ENCODE measurements at regions of chr10 and their contacts with region 1.

Region 1: DNA sequence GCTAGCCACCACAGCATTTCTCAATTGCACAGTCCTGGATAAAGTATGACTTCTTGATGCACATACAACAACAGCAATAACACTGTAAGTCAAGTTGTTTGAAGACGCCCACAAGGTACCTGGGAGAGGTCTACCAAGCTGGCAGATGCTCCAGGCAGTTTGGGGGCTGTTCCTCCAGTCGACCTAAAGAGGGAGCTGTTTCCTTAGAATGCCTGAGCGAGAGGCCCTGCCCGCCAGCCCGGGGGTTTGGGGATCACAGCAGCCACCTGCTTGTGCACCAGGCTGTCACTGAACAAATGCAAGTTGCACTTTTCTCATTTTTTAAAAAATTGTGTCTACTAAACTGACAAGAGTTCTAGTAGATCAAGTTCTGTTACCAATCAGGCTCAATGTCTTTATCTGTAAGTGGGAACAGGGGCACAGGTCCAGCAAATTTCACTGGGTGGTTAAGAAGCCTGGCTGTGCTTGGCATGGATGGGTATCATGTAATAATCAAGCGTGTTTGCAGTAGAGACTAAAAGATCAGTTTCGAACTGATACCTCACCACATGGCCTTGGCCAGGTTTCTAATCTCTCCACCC is 193.8 kb upstream of the ADO start:
- DNase-seq: peak; percentile 60
- ATAC-seq: peak; percentile 98
- H3K4me3 ChIP-seq: no peak overlapping the region
- H3K27ac ChIP-seq: no peak overlapping the region
- H3K4me1 ChIP-seq: peaks cover 0 to 14% of the 10 kb centered on the region in 2 experiments; a peak in 2 of 4 replicates
- H3K27me3 ChIP-seq: no peaks in the 10 kb centered on the region
- CTCF ChIP-seq: peak; percentile 84 to 99 (median 97)
- POLR2A ChIP-seq: no peak
- RAD21 ChIP-seq: peak; percentile 96

Region 2: GRCh38 chr10:63003816-63004453 is 393.2 kb after region 1 on chr10:
- CTCF ChIA-PET with region 1: no interaction called
- POLR2A ChIA-PET with region 1: no interaction called
- RAD21 ChIA-PET with region 1: no interaction called
- intact Hi-C with region 1: loop called (anchors 5 kb)
- DNase-seq: peak; percentile 7
- ATAC-seq: no peak; the same call in 1 of the 2 replicates
- H3K4me3 ChIP-seq: no peak overlapping the region
- H3K27ac ChIP-seq: no peak overlapping the region
- H3K4me1 ChIP-seq: no peaks in the 10 kb centered on the region
- H3K27me3 ChIP-seq: no peaks in the 10 kb centered on the region
- CTCF ChIP-seq: peak; percentile 15 to 54 (median 41); a peak in 4 of 6 replicates
- POLR2A ChIP-seq: no peak
- RAD21 ChIP-seq: peak; percentile 36; the same call in 1 of the 2 replicates